CD14-positive monocyte (primary cell): ENCODE measurements at regions of chrX and their contacts with region 1.

Region 1: GRCh38 chrX:20266810-20267606 is at the start of gene RPS6KA3:
- DNase-seq: peak; percentile 78 to 91 (median 86)
- H3K4me3 ChIP-seq: peak within 1 kb of the TSS; percentile 78 to 85 (median 82)
- H3K4me3 Mint-ChIP-seq: peak within 1 kb of the TSS; percentile 94
- H3K27ac ChIP-seq: peak within 1 kb of the TSS; percentile 86 to 89
- H3K27ac Mint-ChIP-seq: peak within 1 kb of the TSS; percentile 87 to 96 (median 92)
- H3K4me1 ChIP-seq: peaks cover 20 to 24% of the 10 kb centered on the region in 2 donors
- H3K4me1 Mint-ChIP-seq: peaks cover 15% of the 10 kb centered on the region
- H3K27me3 ChIP-seq: no peaks in the 10 kb centered on the region
- H3K27me3 Mint-ChIP-seq: peaks cover 0 to 26% (median 0%) of the 10 kb centered on the region in 3 donors
- CTCF ChIP-seq: no peak
- polyA plus RNA-seq, gene RPS6KA3: 14.6 to 28.2 (median 21.6) TPM

Region 2: DNA sequence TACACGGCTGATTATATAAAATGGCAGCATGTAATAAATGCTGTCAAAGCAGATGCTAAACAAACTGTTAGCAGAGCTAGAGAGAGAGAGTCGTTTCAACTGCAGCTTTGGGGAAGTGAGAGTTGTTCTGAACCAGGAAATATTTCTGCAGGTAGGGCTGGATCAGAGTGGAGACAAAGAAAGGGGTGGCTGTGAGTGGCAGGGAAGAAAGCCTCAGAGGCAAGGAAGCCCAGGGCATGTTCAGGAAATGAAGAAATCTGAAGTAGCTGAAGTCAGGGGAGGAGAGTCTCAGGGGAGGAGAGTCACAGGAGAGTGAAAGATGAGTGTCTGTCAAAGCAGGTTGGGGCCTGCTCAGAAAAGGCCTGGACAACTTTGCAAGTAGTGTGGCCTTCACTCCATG is 48.1 kb after region 1 on chrX:
- intact Hi-C with region 1: loop called in 1 of 2 experiments (anchors 10 kb)
- DNase-seq: peak; percentile 10 to 13 (median 12)
- H3K4me3 ChIP-seq: no peak overlapping the region
- H3K4me3 Mint-ChIP-seq: no peak overlapping the region
- H3K27ac ChIP-seq: peak overlapping the region in 1 of 2 donors; percentile 22
- H3K27ac Mint-ChIP-seq: peak overlapping the region in 6 of 7 donors; percentile 53 to 83 (median 75)
- H3K4me1 ChIP-seq: peaks cover 59 to 60% of the 10 kb centered on the region in 2 donors
- H3K4me1 Mint-ChIP-seq: peaks cover 65% of the 10 kb centered on the region
- H3K27me3 ChIP-seq: no peaks in the 10 kb centered on the region
- H3K27me3 Mint-ChIP-seq: peaks cover 0 to 1% (median 0%) of the 10 kb centered on the region in 3 donors
- CTCF ChIP-seq: no peak

Region 3: GRCh38 chrX:20378291-20378920 is 111.4 kb after region 1 on chrX:
- intact Hi-C with region 1: loop called in 1 of 2 experiments (anchors 10 kb)
- DNase-seq: peak in 1 of 3 donors; percentile 46
- H3K4me3 ChIP-seq: no peak overlapping the region
- H3K4me3 Mint-ChIP-seq: no peak overlapping the region
- H3K27ac ChIP-seq: no peak overlapping the region
- H3K27ac Mint-ChIP-seq: peak overlapping the region in 2 of 7 donors; percentile 36 to 45
- H3K4me1 ChIP-seq: peaks cover 25 to 28% of the 10 kb centered on the region in 2 donors
- H3K4me1 Mint-ChIP-seq: peaks cover 33% of the 10 kb centered on the region
- H3K27me3 ChIP-seq: peaks cover 0 to 2% of the 10 kb centered on the region in 2 donors
- H3K27me3 Mint-ChIP-seq: peaks cover 0 to 3% (median 2%) of the 10 kb centered on the region in 3 donors
- CTCF ChIP-seq: no peak

Region 4: DNA sequence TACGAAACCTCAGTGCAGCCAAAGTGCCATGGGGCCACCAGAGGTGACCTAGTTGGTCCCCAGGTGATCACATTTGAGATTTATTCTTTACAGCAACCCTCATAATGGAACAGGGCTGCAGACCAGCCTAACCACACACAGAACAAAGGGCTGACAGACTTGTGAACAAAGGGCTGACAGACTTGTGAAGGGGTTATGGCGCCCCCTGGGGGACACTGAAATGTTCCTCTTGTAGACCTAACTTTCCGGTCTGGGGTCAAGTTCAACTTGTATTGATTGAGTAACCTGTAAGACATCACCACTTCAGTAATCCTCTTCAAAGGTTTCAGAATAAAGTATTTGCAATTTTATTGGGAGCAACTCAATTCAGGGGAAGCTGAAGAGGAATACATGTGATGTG is 175.6 kb after region 1 on chrX:
- intact Hi-C with region 1: loop called in 1 of 2 experiments (anchors 5 kb)
- DNase-seq: peak; percentile 66 to 82 (median 73)
- H3K4me3 ChIP-seq: no peak overlapping the region
- H3K4me3 Mint-ChIP-seq: no peak overlapping the region
- H3K27ac ChIP-seq: no peak overlapping the region
- H3K27ac Mint-ChIP-seq: no peak overlapping the region
- H3K4me1 ChIP-seq: peaks cover 13 to 16% of the 10 kb centered on the region in 2 donors
- H3K4me1 Mint-ChIP-seq: peaks cover 17% of the 10 kb centered on the region
- H3K27me3 ChIP-seq: no peaks in the 10 kb centered on the region
- H3K27me3 Mint-ChIP-seq: peaks cover 0 to 1% (median 0%) of the 10 kb centered on the region in 3 donors
- CTCF ChIP-seq: peak; percentile 63

Region 5: DNA sequence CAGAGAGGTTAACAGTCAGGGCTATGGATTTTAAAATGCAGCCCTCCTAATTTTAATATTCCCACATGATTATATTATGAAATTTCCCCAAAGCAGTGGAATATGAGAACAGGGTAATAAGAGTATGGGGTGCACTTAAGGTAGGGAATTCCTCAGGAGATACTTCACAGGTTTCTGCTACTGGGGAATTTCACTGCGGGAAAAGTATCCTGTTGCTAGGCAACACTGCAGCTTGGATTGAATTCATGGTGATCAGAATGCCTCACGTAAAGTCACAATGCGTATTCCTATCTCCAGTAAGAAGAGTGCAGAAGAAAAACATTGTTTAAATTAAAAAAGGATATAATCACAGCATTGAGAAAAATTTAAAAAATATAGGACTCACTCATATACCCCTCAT is 397.8 kb after region 1 on chrX:
- intact Hi-C with region 1: no loop called
- DNase-seq: no peak
- H3K4me3 ChIP-seq: no peak overlapping the region
- H3K4me3 Mint-ChIP-seq: no peak overlapping the region
- H3K27ac ChIP-seq: no peak overlapping the region
- H3K27ac Mint-ChIP-seq: no peak overlapping the region
- H3K4me1 ChIP-seq: no peaks in the 10 kb centered on the region
- H3K4me1 Mint-ChIP-seq: no peaks in the 10 kb centered on the region
- H3K27me3 ChIP-seq: no peaks in the 10 kb centered on the region
- H3K27me3 Mint-ChIP-seq: peaks cover 0 to 2% (median 0%) of the 10 kb centered on the region in 3 donors
- CTCF ChIP-seq: no peak